GM12878 (cell line): ENCODE measurements at regions of chrX and their contacts with region 1.

Region 1: GRCh38 chrX:135484641-135485289 is 35.7 kb upstream of the INTS6L start:
- DNase-seq: no peak
- ATAC-seq: peak; percentile 38; the same call in 2 of the 3 replicates
- H3K4me3 ChIP-seq: no peak overlapping the region
- H3K27ac ChIP-seq: no peak overlapping the region
- H3K4me1 ChIP-seq: peaks cover 9% of the 10 kb centered on the region
- H3K27me3 ChIP-seq: no peaks in the 10 kb centered on the region
- CTCF ChIP-seq: peak; percentile 49 to 69 (median 59); a peak in 5 of 6 replicates
- EP300 ChIP-seq: no peak
- POLR2A ChIP-seq: no peak
- RAD21 ChIP-seq: peak; percentile 86

Region 2: DNA sequence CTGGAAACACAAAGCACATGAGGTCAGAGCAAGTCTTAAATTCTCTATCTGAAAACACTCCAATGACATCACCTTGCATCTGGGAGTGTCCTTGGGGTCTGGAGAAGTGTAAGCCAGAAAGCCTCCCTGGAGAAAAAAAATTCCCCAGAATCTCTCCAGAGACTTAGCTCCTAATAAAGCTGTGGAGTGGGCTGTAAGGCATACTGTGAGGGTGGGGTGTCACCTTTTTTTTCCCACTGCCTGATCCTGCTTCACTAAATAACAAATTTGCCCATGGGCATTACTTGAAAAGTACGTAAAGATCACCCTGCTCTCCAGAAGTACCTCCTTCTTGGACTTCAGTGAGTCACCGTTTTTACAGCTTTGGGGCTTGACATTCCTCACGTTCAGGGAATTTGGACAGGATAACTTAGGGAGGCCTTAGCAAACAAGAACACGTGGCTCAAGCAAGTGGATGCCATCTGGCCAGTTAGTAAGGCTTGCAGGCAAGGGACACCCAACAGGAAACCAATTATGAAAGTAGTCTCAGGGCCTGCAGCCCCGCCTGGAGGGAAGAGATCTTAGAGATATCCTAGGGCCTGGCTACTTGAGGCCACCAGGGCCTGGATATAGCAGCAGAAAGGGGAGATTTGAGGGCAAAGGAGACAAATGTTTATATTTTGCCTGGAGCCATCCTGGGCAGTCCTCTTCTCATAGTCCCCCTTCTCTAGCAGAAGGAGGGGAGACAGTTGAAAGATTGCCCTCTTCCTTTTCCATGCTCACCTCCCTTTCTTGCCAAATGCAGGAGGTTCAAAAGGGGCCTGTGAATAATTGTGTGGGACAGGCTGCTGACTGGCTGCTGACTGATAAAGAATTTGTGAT is 766.4 kb before region 1 on chrX:
- CTCF ChIA-PET with region 1: no interaction called
- POLR2A ChIA-PET with region 1: no interaction called
- RAD21 ChIA-PET with region 1: no interaction called
- SMC1A ChIA-PET with region 1: no interaction called
- in situ Hi-C with region 1: no loop called
- intact Hi-C with region 1: no loop called
- DNase-seq: no peak
- ATAC-seq: peak; percentile 61
- H3K4me3 ChIP-seq: no peak overlapping the region
- H3K27ac ChIP-seq: 0 out of 2 replicates have a peak overlapping the region, but pooled peaks have one; percentile 7
- H3K4me1 ChIP-seq: 0 out of 2 replicates have a peak, but pooled peaks cover 5% of the 10 kb centered on the region
- H3K27me3 ChIP-seq: no peaks in the 10 kb centered on the region
- CTCF ChIP-seq: no peak
- EP300 ChIP-seq: no peak
- POLR2A ChIP-seq: no peak
- RAD21 ChIP-seq: no peak

Region 3: GRCh38 chrX:135521405-135522189 is 36.8 kb after region 1 on chrX:
- CTCF ChIA-PET with region 1: interaction called, 5 read pairs
- POLR2A ChIA-PET with region 1: interaction called, 15 read pairs
- RAD21 ChIA-PET with region 1: interaction called, 5 read pairs
- SMC1A ChIA-PET with region 1: interaction called, 11 read pairs
- in situ Hi-C with region 1: no loop called
- intact Hi-C with region 1: loop called (anchors 2 kb)
- DNase-seq: peak; percentile 64
- ATAC-seq: peak; percentile 81
- H3K4me3 ChIP-seq: peak overlapping the region; percentile 73
- H3K27ac ChIP-seq: peak overlapping the region; percentile 74
- H3K4me1 ChIP-seq: no peaks in the 10 kb centered on the region
- H3K27me3 ChIP-seq: no peaks in the 10 kb centered on the region
- CTCF ChIP-seq: peak in 1 of 3 experiments; percentile 9; a peak in 2 of 6 replicates
- EP300 ChIP-seq: 0 out of 4 replicates have a peak, but pooled peaks of 1 of the 2 experiments have one; percentile 30
- POLR2A ChIP-seq: peak; percentile 74
- RAD21 ChIP-seq: no peak

Region 4: GRCh38 chrX:135543924-135544323 is 59.2 kb after region 1 on chrX:
- CTCF ChIA-PET with region 1: interaction called, 14 read pairs
- POLR2A ChIA-PET with region 1: no interaction called
- RAD21 ChIA-PET with region 1: interaction called, 4 read pairs
- SMC1A ChIA-PET with region 1: interaction called, 7 read pairs
- in situ Hi-C with region 1: no loop called
- intact Hi-C with region 1: loop called (anchors 2 kb)
- DNase-seq: no peak
- ATAC-seq: peak; percentile 85
- H3K4me3 ChIP-seq: no peak overlapping the region
- H3K27ac ChIP-seq: no peak overlapping the region
- H3K4me1 ChIP-seq: no peaks in the 10 kb centered on the region
- H3K27me3 ChIP-seq: no peaks in the 10 kb centered on the region
- CTCF ChIP-seq: peak; percentile 31 to 44 (median 36); a peak in 5 of 6 replicates
- EP300 ChIP-seq: no peak
- POLR2A ChIP-seq: no peak
- RAD21 ChIP-seq: peak; percentile 31; the same call in 1 of the 2 replicates

Region 5: GRCh38 chrX:135572436-135572835 is 87.7 kb after region 1 on chrX:
- CTCF ChIA-PET with region 1: interaction called, 12 read pairs
- POLR2A ChIA-PET with region 1: no interaction called
- RAD21 ChIA-PET with region 1: interaction called, 3 read pairs
- SMC1A ChIA-PET with region 1: interaction called, 14 read pairs
- in situ Hi-C with region 1: no loop called
- intact Hi-C with region 1: loop called (anchors 2 kb)
- DNase-seq: no peak
- ATAC-seq: no peak
- H3K4me3 ChIP-seq: no peak overlapping the region
- H3K27ac ChIP-seq: no peak overlapping the region
- H3K4me1 ChIP-seq: no peaks in the 10 kb centered on the region
- H3K27me3 ChIP-seq: no peaks in the 10 kb centered on the region
- CTCF ChIP-seq: peak in 2 of 3 experiments; percentile 20 to 27; a peak in 3 of 6 replicates
- EP300 ChIP-seq: no peak
- POLR2A ChIP-seq: no peak
- RAD21 ChIP-seq: peak; percentile 38; the same call in 1 of the 2 replicates

Region 6: DNA sequence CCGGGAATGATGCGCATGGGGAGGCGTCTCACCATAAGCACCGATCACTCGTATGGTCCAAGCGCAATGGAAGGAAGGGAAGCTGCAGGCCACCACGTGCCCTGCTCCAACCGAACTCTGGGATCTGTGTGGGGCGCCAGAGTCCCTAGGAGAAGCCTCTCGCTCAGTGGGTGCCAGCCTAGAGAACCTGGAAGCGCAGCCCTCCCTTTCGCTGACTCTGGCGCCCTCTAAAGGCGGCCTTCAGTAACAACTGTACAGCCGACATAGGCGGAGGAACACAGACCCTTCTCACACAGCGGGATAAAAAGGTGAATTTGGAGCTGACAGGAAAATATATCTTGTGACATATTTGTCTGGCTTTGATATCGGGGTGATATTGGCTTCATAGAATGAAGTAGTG is 111.7 kb after region 1 on chrX:
- CTCF ChIA-PET with region 1: interaction called, 28 read pairs
- POLR2A ChIA-PET with region 1: interaction called, 4 read pairs
- RAD21 ChIA-PET with region 1: interaction called, 4 read pairs
- SMC1A ChIA-PET with region 1: interaction called, 11 read pairs
- in situ Hi-C with region 1: no loop called
- intact Hi-C with region 1: loop called (anchors 1 kb)
- DNase-seq: no peak
- ATAC-seq: peak; percentile 95
- H3K4me3 ChIP-seq: no peak overlapping the region
- H3K27ac ChIP-seq: no peak overlapping the region
- H3K4me1 ChIP-seq: no peaks in the 10 kb centered on the region
- H3K27me3 ChIP-seq: no peaks in the 10 kb centered on the region
- CTCF ChIP-seq: peak; percentile 55 to 68 (median 67)
- EP300 ChIP-seq: no peak
- POLR2A ChIP-seq: no peak
- RAD21 ChIP-seq: peak; percentile 65

Region 7: GRCh38 chrX:135652611-135653010 is 167.8 kb after region 1 on chrX:
- CTCF ChIA-PET with region 1: no interaction called
- POLR2A ChIA-PET with region 1: no interaction called
- RAD21 ChIA-PET with region 1: no interaction called
- SMC1A ChIA-PET with region 1: no interaction called
- in situ Hi-C with region 1: no loop called
- intact Hi-C with region 1: no loop called
- DNase-seq: no peak
- ATAC-seq: peak; percentile 60
- H3K4me3 ChIP-seq: no peak overlapping the region
- H3K27ac ChIP-seq: no peak overlapping the region
- H3K4me1 ChIP-seq: peaks cover 7% of the 10 kb centered on the region
- H3K27me3 ChIP-seq: no peaks in the 10 kb centered on the region
- CTCF ChIP-seq: no peak
- EP300 ChIP-seq: no peak
- POLR2A ChIP-seq: no peak
- RAD21 ChIP-seq: no peak

Region 8: GRCh38 chrX:135697601-135698000 is 212.8 kb after region 1 on chrX:
- CTCF ChIA-PET with region 1: no interaction called
- POLR2A ChIA-PET with region 1: no interaction called
- RAD21 ChIA-PET with region 1: no interaction called
- SMC1A ChIA-PET with region 1: no interaction called
- in situ Hi-C with region 1: no loop called
- intact Hi-C with region 1: loop called (anchors 5 kb)
- DNase-seq: no peak
- ATAC-seq: peak; percentile 51
- H3K4me3 ChIP-seq: no peak overlapping the region
- H3K27ac ChIP-seq: no peak overlapping the region
- H3K4me1 ChIP-seq: no peaks in the 10 kb centered on the region
- H3K27me3 ChIP-seq: no peaks in the 10 kb centered on the region; a peak in 1 of 4 replicates
- CTCF ChIP-seq: peak; percentile 21 to 61 (median 23); a peak in 4 of 6 replicates
- EP300 ChIP-seq: no peak
- POLR2A ChIP-seq: no peak
- RAD21 ChIP-seq: peak; percentile 70